ENCODE measurements at regions of chr1 and their contacts with region 1.

Region 1: DNA sequence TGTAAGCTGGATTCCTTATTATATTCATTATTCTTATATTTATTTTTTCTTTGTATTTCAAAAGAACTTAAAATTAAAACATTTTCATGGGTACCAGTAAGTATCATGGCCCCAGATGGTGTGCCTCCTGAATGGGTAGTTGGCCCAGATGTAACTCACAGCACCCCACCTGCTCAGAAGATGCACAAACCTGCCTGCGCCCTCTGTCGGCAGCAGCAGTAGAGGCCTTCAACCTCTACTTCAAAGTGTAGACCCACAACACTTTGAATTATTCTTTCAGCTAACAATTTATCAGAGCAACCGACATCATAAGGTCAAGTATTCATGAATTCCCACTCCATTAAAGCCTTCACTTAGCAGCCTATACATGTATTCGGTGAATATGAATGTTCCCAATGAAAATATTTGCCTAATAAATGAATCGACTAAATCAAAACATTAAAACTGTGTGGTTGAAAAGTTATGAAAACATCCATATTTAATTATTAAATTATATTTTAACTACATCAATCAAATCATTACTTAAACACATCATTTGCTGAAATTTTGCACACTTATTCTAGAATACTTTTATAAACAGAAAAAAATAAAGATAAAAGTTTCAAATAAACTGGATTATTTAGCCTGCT is 25.4 kb downstream of the PIGM start:
- DNase-seq: peak; percentile 74
- H3K4me3 ChIP-seq: no peak overlapping the region
- H3K27ac ChIP-seq: no peak overlapping the region
- H3K4me1 ChIP-seq: no peaks in the 10 kb centered on the region
- H3K27me3 ChIP-seq: no peaks in the 10 kb centered on the region
- CTCF ChIP-seq: peak; percentile 74 to 84 (median 75)
- POLR2A ChIP-seq: no peak

Region 2: GRCh38 chr1:159780583-159781582 is 225.5 kb before region 1 on chr1 and contains the start of gene DUSP23:
- intact Hi-C with region 1: loop called (anchors 10 kb)
- DNase-seq: peak; percentile 98
- H3K4me3 ChIP-seq: peak within 1 kb of the TSS; percentile 53 to 83
- H3K27ac ChIP-seq: peak within 1 kb of the TSS; percentile 48 to 74
- H3K4me1 ChIP-seq: no peaks in the 10 kb centered on the region
- H3K27me3 ChIP-seq: no peaks in the 10 kb centered on the region
- CTCF ChIP-seq: peak; percentile 87 to 99 (median 95)
- POLR2A ChIP-seq: peak; percentile 79
- total RNA-seq, gene DUSP23: 79.3 to 85.0 TPM

Region 3: DNA sequence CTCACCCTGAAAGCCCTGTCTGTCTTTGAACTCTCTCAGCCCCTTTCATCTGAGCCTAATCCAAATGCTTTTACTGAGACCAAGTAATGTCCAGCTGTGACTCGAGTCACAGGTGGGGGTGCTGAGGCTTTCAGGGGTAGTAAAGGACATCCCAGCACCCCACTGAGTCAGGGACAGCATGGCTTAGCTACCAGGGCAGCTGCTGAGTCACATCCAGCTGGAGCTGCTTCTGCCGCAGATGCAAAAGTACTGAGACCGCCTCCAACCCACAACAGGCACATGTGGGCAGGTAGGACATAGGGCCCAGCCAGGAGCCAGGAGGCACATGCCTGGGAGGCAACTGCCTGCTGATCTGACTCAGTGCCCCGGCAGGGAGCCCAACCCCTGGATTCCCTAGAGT is 137.3 kb before region 1 on chr1:
- intact Hi-C with region 1: no loop called
- DNase-seq: no peak
- H3K4me3 ChIP-seq: no peak overlapping the region
- H3K27ac ChIP-seq: no peak overlapping the region
- H3K4me1 ChIP-seq: no peaks in the 10 kb centered on the region
- H3K27me3 ChIP-seq: no peaks in the 10 kb centered on the region
- CTCF ChIP-seq: no peak
- POLR2A ChIP-seq: no peak

Region 4: DNA sequence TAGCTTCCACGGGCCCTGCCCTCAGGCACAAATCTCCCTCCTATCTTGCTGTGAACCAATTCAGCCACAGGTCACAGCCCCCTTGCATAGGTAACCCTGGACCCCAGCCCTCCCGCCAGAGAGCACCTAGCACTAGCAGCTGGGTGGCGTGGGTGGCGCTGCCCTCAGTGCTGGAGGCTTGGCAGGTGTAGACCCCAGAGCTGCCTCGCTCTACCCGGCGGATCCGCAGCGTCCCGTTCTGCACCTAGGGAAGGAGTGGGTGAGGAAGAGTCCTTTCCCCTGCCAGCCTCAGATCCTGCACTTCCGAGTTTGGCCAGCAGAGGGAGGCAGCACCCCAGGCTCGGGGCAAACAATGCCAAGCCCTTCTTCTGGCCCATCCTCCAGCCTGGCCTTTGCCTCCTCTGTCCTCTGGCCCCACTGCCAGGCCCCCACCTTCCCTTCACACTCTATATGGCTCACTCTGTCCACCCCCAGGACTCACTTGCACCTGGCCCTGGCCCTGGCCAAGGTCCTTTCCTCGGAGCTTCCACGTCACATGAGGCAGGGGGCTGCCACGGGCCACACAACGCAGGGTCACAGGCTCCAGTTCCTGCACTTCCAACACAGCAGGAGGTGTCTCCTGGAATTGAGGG is 70.0 kb before region 1 on chr1:
- intact Hi-C with region 1: loop called (anchors 1 kb)
- DNase-seq: peak; percentile 62
- H3K4me3 ChIP-seq: no peak overlapping the region
- H3K27ac ChIP-seq: no peak overlapping the region
- H3K4me1 ChIP-seq: no peaks in the 10 kb centered on the region
- H3K27me3 ChIP-seq: no peaks in the 10 kb centered on the region
- CTCF ChIP-seq: peak; percentile 95 to 98 (median 96)
- POLR2A ChIP-seq: no peak